ENCODE measurements at regions of chr18 and their contacts with region 1.

Region 1: GRCh38 chr18:63741769-63742168 is 33.4 kb upstream of the SERPINB7 start:
- DNase-seq: peak; percentile 72
- H3K4me3 ChIP-seq: no peak overlapping the region
- H3K27ac ChIP-seq: no peak overlapping the region
- H3K4me1 ChIP-seq: peaks cover 7% of the 10 kb centered on the region
- H3K27me3 ChIP-seq: no peaks in the 10 kb centered on the region

Region 2: DNA sequence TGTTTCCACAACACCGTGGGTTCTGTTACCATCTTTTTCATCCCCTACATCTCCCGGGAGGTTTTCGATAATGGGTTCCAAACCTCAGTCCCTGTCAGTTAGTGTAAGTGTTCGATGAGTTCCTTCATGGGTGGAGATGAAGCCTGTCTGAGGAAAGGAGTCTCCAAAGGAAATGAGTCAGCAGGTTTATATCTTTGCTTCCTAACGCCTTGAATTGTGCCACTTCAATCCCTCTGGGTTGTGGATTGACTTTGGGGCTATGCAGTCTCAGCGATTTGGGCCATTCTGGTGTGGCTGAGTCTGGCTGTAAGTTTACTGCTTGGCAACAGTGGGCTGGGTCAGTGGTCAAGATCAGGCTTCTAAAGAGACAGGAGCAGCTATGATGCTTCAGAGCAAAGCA is 263.8 kb before region 1 on chr18:
- in situ Hi-C with region 1: no loop called
- DNase-seq: peak; percentile 24
- H3K4me3 ChIP-seq: no peak overlapping the region
- H3K27ac ChIP-seq: no peak overlapping the region
- H3K4me1 ChIP-seq: peaks cover 7% of the 10 kb centered on the region; the same call in 1 of the 2 replicates
- H3K27me3 ChIP-seq: no peaks in the 10 kb centered on the region

Region 3: DNA sequence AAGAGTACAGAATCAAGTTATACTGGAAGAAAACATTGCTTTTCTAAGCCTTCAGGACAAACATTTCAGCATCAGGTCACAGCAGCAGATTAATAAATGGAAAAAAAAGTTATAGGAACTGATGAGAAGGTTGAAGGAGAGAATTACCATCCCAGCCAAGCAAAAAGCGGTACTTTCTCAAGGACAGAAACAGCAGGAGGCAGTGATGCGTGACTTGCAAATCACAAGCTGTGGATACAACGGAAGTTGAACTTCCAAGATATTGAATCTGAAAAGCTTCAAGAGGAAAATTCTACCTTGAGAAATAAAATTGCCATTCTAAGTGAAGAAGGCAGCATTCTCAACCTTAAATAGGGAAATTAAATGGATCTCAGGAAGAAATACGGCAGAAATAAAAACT is 218.1 kb before region 1 on chr18:
- in situ Hi-C with region 1: loop called (anchors 5 kb)
- DNase-seq: peak; percentile 8
- H3K4me3 ChIP-seq: no peak overlapping the region
- H3K27ac ChIP-seq: no peak overlapping the region
- H3K4me1 ChIP-seq: no peaks in the 10 kb centered on the region
- H3K27me3 ChIP-seq: no peaks in the 10 kb centered on the region

Region 4: GRCh38 chr18:63578357-63578958 is 163.3 kb before region 1 on chr18:
- in situ Hi-C with region 1: loop called (anchors 25 kb)
- DNase-seq: peak; percentile 54
- H3K4me3 ChIP-seq: no peak overlapping the region
- H3K27ac ChIP-seq: no peak overlapping the region
- H3K4me1 ChIP-seq: no peaks in the 10 kb centered on the region
- H3K27me3 ChIP-seq: no peaks in the 10 kb centered on the region

Measured in GM23248 (cell line).